ENCODE measurements at regions of chr7 and their contacts with region 1.

Region 1: DNA sequence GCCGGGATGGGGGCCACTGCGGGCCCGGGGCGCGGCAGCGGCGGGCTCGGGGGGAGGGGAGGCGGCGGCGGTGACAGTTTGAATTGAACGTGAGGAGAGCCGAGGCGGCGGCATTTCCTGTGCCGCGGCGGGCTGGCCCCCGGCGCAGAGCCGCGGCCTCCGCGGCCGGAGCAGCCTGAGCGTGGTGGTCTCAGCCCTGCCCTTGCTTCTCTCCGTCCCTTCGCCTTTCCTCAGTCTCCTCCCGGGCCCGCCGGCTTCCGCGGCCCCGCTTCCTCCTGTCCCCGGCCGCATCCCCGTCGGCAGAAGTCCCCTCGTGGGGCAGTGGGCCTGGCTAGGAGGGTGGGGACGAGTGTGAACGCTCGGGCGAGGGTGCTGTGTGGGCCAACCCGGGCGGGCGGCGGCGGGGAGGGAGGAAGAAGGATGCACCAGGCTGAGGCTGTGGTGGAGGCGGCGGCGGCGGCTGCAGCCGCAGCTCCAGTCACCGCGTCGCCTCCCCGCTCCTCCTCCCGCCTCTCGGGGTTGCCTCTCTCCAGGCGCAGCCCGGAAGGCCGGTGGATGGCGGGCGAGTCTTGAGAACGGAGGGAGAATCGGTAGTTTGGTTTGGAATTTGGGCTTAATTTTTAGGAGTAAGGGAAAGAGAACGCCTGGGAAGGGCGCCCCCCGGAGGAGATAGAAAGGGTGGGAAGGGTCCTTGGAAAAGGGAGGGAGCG is 690 bp downstream of the SEPTIN7 start:
- DNase-seq: peak; percentile 76

Region 2: GRCh38 chr7:35716038-35716803 is 85.3 kb before region 1 on chr7:
- in situ Hi-C with region 1: loop called (anchors 25 kb)
- DNase-seq: peak; percentile 44

Measured in SK-MEL-5 (cell line).